Heart right ventricle (tissue), 16 donors: ENCODE measurements at regions of chr9 and their contacts with region 1.

Region 1: GRCh38 chr9:84697509-84698114 is 28.1 kb downstream of the NTRK2 start:
- DNase-seq: peak; percentile 67 to 74
- ATAC-seq: peak; percentile 45 to 92 (median 82)
- H3K4me3 ChIP-seq: no peak overlapping the region
- H3K27ac ChIP-seq: no peak overlapping the region
- H3K4me1 ChIP-seq: peaks cover 0 to 8% (median 0%) of the 10 kb centered on the region in 9 donors
- H3K27me3 ChIP-seq: peaks cover 0 to 4% (median 0%) of the 10 kb centered on the region in 7 donors
- CTCF ChIP-seq: peak; percentile 44 to 82 (median 73)

Region 2: GRCh38 chr9:84296146-84296843 is 401.3 kb before region 1 on chr9:
- intact Hi-C with region 1: no loop called
- DNase-seq: no peak
- ATAC-seq: no peak
- H3K4me3 ChIP-seq: no peak overlapping the region
- H3K27ac ChIP-seq: peak overlapping the region in 1 of 10 donors; percentile 77
- H3K4me1 ChIP-seq: peaks cover 0 to 32% (median 0%) of the 10 kb centered on the region in 9 donors
- H3K27me3 ChIP-seq: no peaks in the 10 kb centered on the region
- CTCF ChIP-seq: no peak

Region 3: GRCh38 chr9:84620338-84620737 is 77.3 kb before region 1 on chr9:
- intact Hi-C with region 1: no loop called
- DNase-seq: no peak
- ATAC-seq: peak in 1 of 8 donors; percentile 11
- H3K4me3 ChIP-seq: no peak overlapping the region
- H3K27ac ChIP-seq: no peak overlapping the region
- H3K4me1 ChIP-seq: no peaks in the 10 kb centered on the region
- H3K27me3 ChIP-seq: no peaks in the 10 kb centered on the region
- CTCF ChIP-seq: no peak

Region 4: DNA sequence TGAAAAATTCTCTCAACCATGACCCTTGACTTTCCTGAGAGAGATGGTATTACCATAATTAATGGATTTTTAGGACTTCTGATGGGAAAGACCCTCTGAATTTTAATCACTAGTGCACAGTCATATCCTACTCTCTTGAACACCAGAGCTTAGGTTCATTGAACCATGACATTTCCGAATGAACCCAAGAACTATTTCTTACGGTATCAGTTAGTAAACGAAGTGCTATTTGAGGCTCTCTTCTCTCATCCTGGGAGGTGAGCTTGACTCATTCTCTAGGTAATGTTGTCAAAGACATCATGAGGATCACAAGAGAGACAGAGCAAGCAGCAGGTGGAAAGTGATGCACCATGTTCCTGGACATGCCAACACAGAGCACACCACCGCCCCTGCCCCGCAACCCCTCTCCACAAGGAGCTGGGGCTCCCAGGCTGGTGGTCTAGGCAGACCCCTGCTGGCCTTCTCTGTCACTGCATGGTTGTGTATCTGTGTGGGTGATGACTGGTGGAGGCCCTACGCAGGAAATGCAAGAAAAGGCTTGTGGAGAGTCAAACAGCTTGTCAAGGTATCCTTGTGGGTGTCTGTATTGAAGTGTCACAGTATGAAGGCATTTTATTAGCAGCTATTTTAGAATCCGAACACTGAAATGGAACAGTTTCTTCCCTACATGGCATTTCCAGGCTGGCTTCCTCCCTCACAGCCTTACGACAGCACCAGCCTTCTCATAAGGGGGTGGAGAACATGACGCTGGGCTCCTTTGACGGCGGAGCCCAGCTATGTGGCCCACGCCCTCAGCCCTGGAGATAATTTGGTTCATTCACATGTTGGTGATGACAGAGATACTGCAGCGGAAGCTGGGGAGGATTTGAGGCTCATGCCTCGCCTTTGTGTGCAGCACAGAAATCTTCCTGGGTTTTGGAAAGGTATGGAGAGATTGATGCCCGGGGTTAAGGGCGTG is 269.5 kb after region 1 on chr9:
- intact Hi-C with region 1: loop called in 1 of 10 experiments (anchors 5 kb)
- DNase-seq: no peak
- ATAC-seq: no peak
- H3K4me3 ChIP-seq: no peak overlapping the region
- H3K27ac ChIP-seq: no peak overlapping the region
- H3K4me1 ChIP-seq: no peaks in the 10 kb centered on the region
- H3K27me3 ChIP-seq: peaks cover 0 to 17% (median 6%) of the 10 kb centered on the region in 7 donors
- CTCF ChIP-seq: no peak